OCI-LY7 (cell line): ENCODE measurements at regions of chrX and their contacts with region 1.

Region 1: DNA sequence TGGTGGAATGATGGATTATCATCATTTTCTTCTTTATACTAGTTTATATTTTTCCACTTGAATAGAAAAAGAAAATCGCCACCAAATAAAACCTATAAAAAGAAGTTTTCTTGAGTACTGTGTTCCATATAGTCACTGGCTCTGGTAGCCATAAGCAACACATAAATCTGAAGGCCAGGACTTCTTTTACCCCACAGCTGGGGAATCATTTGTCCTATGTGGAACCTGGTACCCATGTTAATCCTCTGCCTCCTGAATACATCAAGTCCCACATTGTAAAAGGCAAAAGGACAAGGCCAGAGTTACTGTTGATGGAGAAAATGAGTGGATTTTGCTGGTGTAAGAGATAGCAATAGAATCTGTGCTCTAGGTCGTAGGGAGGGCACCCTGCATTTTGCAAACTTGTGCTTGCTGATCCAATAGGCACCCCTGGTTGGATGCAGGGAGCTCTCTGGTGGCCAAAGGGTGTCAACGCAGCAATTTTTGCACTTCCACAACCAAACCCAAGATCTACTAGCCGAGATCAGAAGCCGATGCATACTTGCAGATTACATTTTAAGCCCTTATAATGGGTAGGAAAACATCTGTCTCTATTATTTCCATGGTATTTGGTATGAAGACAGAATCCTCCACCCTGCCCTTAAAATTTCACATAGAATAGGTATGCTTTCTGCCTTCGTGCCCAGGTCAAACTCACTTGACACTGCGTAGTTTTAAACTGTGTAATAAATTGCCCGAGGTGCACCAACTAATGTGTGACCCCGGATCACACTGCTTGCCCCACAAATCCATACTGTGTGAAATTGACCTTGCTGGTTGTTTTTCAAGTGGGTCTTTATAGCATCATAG is 146.2 kb upstream of the SCML1 start:
- DNase-seq: peak; percentile 11
- H3K4me3 ChIP-seq: no peak overlapping the region
- H3K27ac ChIP-seq: no peak overlapping the region
- H3K4me1 ChIP-seq: no peaks in the 10 kb centered on the region
- CTCF ChIP-seq: peak; percentile 69

Region 2: GRCh38 chrX:17242470-17242869 is 348.6 kb before region 1 on chrX:
- CTCF ChIA-PET with region 1: no interaction called
- POLR2A ChIA-PET with region 1: no interaction called
- intact Hi-C with region 1: loop called (anchors 10 kb)
- DNase-seq: peak; percentile 21
- H3K4me3 ChIP-seq: no peak overlapping the region
- H3K27ac ChIP-seq: no peak overlapping the region
- H3K4me1 ChIP-seq: no peaks in the 10 kb centered on the region
- CTCF ChIP-seq: peak; percentile 80

Region 3: DNA sequence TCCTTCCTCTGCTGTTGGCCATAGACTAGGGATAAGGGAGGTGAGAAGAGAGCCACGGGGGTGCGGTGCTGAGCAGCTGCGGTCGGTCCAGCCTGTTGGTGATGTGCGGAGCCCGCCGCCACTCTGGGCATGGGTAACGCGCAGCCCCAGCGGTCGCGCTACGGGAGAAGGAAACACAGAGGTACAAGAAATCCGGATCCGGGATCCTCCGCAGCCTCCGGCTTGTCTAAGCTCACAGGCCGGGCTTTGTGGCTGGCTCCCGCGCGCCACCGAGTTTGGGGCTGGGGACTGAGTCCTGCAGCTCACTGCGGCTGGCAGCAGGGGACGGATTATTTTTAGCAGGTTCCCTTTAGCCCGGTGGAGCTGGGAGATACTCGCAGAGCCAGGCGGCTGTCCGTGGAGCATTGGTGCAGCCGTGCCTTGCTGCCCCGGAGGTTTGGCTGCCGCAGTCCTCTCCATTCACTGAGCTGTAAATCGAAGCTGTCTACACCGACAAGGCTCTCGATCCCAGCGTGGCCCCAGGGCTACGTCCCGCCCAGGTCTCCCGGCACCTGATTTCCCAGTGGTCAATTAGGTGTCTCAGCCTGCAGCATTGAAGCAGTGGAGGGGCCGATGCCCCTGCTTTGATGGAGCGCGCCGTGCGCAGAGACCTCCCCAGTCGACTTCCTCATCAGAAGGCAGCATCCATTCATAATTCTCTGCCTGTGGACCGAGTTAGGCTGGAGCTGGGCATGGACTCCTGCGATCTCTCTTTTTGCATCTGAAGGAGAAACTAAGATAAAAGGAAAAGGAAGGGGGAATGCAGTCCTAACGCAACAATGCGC is 64.3 kb after region 1 on chrX:
- CTCF ChIA-PET with region 1: no interaction called
- POLR2A ChIA-PET with region 1: no interaction called
- intact Hi-C with region 1: no loop called
- DNase-seq: no peak
- H3K4me3 ChIP-seq: no peak overlapping the region
- H3K27ac ChIP-seq: no peak overlapping the region
- H3K4me1 ChIP-seq: no peaks in the 10 kb centered on the region
- CTCF ChIP-seq: no peak

Region 4: DNA sequence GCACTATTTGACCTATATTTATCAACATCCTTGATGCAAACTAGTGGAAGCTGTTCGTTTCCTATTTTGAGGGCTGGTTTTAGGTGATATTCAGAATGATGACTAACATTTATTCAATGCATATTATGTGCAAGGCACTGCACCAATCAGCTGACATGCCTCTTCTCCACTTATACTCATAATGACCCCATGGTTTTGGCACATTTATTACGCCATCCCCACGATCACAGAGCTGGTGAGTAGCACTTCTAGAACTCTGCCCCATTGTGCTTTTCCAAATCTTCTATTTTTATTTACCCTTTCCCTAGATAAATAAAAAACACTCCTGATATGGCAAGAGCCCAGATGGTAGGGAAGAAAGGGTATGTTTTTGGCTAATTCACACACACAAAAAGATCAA is 159.3 kb after region 1 on chrX:
- CTCF ChIA-PET with region 1: no interaction called
- POLR2A ChIA-PET with region 1: no interaction called
- intact Hi-C with region 1: no loop called
- DNase-seq: no peak
- H3K4me3 ChIP-seq: no peak overlapping the region
- H3K27ac ChIP-seq: no peak overlapping the region
- H3K4me1 ChIP-seq: no peaks in the 10 kb centered on the region
- CTCF ChIP-seq: no peak